PC-9 (cell line): ENCODE measurements at regions of chr1 and their contacts with region 1.

Region 1: DNA sequence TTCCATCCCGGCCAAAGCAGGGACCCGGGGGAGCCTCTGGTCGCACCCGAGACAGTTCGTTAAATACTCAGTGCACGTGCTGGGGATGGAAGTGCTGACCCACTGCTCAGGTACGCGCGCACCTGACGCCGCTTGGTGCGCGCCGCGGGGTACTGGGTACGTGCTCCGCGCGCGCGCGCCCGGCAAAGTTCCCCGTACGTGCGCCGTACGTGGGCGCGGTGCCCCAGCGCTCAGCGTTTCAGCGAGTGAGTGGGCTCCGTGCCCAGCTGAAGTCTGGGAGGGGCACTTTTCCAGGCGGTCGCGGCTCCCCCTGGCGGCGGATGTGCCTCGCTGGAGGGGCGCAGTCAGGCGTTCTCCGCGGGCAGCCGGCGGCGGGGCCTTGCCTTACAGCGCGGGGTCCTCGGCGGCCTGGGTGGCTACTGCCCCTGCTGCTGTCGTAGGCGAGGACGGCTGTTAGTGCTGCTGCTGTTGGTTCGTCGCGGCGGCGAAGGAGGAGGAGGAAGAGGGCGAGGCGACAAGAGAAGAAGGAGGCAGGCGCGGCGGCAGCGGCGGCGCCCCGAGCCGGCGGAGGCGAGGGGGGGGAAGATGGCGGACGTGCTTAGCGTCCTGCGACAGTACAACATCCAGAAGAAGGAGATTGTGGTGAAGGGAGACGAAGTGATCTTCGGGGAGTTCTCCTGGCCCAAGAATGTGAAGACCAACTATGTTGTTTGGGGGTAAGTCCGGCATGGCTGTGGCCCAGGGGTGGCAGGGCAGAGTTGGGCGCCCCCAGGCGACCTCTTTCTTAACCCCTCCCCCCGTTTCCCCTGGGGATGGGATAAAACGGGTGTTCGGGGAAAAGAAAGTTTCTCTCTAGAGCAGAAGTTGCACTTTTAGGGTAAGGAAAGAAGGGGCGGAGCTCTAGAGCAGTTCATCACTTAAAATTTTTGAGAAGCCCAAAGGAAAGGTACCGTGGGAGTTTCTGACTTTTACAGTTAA is at the start of gene CDC73:
- DNase-seq: peak; percentile 85 to 99
- H3K4me3 ChIP-seq: peak within 1 kb of the TSS; percentile 100
- H3K27ac ChIP-seq: peak within 1 kb of the TSS; percentile 88
- H3K4me1 ChIP-seq: peaks cover 15% of the 10 kb centered on the region; the same call in 1 of the 2 replicates
- H3K27me3 ChIP-seq: no peaks in the 10 kb centered on the region
- CTCF ChIP-seq: peak; percentile 79
- total RNA-seq, gene CDC73: 39.6 and 47.1 TPM in 2 replicates

Region 2: GRCh38 chr1:193059268-193060225 is 62.4 kb before region 1 on chr1 and contains the starts of genes RO60 and UCHL5:
- CTCF ChIA-PET with region 1: no interaction called
- POLR2A ChIA-PET with region 1: no interaction called
- intact Hi-C with region 1: loop called (anchors 1 kb)
- DNase-seq: peak; percentile 96
- H3K4me3 ChIP-seq: peak within 1 kb of the TSS; percentile 78
- H3K27ac ChIP-seq: peak within 1 kb of the TSS; percentile 92
- H3K4me1 ChIP-seq: peaks cover 23% of the 10 kb centered on the region
- H3K27me3 ChIP-seq: no peaks in the 10 kb centered on the region
- CTCF ChIP-seq: no peak
- total RNA-seq, gene RO60: 40.4 and 49.2 TPM in 2 replicates
- total RNA-seq, gene UCHL5: 37.0 and 49.3 TPM in 2 replicates

Region 3: DNA sequence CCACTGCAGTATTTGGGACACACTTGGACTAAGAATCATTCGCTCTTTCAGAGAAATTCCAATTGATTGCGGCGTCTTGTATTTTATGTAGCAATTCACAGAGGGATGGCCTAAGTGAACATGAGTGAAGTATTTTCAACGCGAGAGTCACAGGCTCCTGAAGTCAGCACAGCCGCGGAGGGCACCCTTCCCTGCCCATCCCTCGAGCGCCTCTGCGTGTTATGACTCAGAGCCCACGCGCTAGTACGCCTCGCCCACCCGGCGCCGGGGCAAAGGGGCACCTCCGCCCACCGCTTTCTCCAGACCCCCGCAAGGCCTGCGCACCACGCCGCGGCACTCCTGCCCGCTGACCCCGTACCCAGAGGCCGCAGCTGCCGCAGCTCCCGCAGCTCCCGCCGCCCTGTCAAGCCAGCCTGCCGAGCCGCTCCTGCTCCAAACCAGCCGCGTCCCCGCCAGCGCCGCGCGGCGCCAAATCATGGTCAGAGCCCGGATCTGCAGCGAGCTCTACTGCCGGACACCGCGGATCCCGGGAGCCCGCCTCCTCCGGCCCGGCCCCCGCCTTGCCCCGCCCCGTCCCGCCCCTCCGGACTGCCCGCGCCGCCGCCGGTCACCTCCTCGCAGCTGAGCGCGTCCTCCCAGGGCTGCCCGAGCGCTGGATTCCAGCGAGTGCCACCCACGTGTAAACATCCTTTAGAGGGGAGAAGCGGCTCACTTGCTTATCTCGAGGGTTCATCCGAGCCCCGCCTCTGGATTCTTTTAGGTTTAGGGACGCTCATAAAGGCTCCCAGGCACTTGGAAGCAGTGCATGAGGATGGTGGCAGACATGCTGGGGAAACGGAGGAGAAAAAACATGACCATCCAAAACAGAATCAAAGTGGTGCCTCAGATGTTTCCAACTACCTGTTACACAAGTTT is 16.7 kb before region 1 on chr1 and contains the start of gene GLRX2:
- CTCF ChIA-PET with region 1: interaction called, 4 read pairs
- POLR2A ChIA-PET with region 1: interaction called, 18 read pairs
- intact Hi-C with region 1: loop called (anchors 1 kb)
- DNase-seq: peak; percentile 70 to 85
- H3K4me3 ChIP-seq: peak within 1 kb of the TSS; percentile 59
- H3K27ac ChIP-seq: peak within 1 kb of the TSS; percentile 76
- H3K4me1 ChIP-seq: peaks cover 16% of the 10 kb centered on the region
- H3K27me3 ChIP-seq: no peaks in the 10 kb centered on the region
- CTCF ChIP-seq: no peak
- total RNA-seq, gene GLRX2: 12.5 and 16.7 TPM in 2 replicates

Region 4: GRCh38 chr1:194133163-194133562 is 1011.3 kb after region 1 on chr1:
- CTCF ChIA-PET with region 1: interaction called, 10 read pairs
- POLR2A ChIA-PET with region 1: no interaction called
- intact Hi-C with region 1: no loop called
- DNase-seq: no peak
- H3K4me3 ChIP-seq: no peak overlapping the region
- H3K27ac ChIP-seq: no peak overlapping the region
- H3K4me1 ChIP-seq: no peaks in the 10 kb centered on the region
- H3K27me3 ChIP-seq: no peaks in the 10 kb centered on the region
- CTCF ChIP-seq: no peak